ENCODE measurements at regions of chr7 and their contacts with region 1.

Region 1: GRCh38 chr7:28921822-28922221 is 36.3 kb downstream of the TRIL start:
- DNase-seq: peak; percentile 30
- H3K4me3 Mint-ChIP-seq: no peak overlapping the region
- H3K27ac Mint-ChIP-seq: no peak overlapping the region
- H3K4me1 Mint-ChIP-seq: peaks cover 5% of the 10 kb centered on the region
- H3K27me3 Mint-ChIP-seq: peaks cover 17% of the 10 kb centered on the region

Region 2: DNA sequence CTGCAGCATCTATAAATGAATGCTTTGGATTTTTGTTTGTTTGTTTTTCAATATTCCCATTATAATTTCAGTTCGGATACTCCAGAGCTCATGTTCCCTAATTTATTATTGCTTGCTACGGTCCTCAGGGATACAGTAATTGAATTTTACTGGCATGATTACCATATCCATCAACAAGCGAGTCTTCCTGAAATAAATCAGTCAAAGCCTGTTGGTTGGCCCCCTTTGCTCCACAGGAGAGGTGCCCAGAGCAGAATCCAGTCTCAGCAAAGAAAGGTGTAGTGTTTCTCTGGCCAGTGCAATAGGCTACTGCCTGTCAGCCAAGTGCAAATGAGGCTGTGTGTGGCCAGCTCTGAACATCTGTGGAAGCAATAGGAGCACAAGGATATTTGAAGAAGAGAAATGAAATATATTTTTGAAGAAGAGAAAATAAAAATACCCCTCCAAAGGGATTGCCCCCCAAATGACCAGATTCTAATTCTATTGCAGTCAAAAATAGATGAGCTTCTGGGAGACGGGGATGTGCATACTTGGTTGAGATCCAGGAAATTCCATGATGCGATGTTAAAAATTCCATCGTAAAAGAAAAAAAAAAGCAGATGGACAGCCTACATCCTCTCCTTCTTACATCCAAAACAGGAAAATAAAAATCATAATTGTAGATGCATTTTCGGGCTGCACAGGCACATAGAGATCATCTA is 18.2 kb after region 1 on chr7:
- CTCF ChIA-PET with region 1: interaction called, 21 read pairs
- POLR2A ChIA-PET with region 1: no interaction called
- DNase-seq: no peak
- H3K4me3 Mint-ChIP-seq: no peak overlapping the region
- H3K27ac Mint-ChIP-seq: no peak overlapping the region
- H3K4me1 Mint-ChIP-seq: no peaks in the 10 kb centered on the region
- H3K27me3 Mint-ChIP-seq: peaks cover 18% of the 10 kb centered on the region

Region 3: DNA sequence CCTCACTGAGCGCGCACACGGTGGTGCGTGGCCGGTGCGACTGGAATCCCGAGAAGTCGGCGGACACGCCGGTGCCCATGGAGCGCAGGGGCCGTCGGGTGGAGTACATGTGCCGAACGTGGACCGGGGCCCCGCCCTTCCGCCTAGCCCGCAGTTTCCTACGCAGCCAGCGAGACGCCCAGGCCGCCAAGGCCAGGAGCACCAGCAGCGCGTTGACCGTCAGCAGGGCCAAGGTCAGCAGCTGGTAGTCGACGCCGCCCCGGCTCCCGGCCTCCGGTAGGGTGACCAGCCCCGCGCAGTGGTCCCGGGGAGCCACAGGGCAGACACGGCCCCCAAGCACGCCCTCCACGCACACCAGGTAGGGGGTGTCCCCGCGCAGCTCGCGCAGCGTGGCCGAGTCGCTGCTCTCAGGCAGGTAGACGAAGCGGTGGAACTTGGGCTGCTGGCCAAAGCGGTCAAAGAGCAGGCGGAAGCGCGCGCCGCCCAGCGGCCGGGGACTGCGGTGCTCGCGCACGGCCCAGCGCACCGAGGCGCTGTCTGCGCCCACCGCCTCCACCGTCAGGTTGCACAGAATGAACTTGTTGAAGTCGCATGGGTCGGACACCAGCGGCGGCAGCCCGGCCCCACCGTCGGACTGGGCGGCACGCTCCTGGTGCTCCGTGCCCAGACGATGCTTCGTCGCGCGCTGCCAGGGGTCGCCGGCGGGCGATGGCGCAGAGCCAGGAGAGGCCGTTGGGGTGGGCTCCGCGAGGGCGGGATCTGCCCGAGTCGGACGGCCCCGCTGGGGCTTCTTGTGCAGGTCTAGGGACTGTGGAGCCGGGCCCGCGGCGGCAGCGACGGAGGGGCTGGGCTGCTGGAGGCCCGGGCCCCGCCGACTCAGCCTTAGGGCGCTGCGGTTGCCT is 34.1 kb after region 1 on chr7:
- CTCF ChIA-PET with region 1: interaction called, 11 read pairs
- POLR2A ChIA-PET with region 1: no interaction called
- DNase-seq: peak; percentile 33
- H3K4me3 Mint-ChIP-seq: peak overlapping the region; percentile 2
- H3K27ac Mint-ChIP-seq: no peak overlapping the region
- H3K4me1 Mint-ChIP-seq: peaks cover 8% of the 10 kb centered on the region
- H3K27me3 Mint-ChIP-seq: peaks cover 66% of the 10 kb centered on the region

Region 4: GRCh38 chr7:29105752-29106668 is 184.2 kb after region 1 on chr7:
- CTCF ChIA-PET with region 1: interaction called, 88 read pairs
- POLR2A ChIA-PET with region 1: no interaction called
- DNase-seq: peak; percentile 24
- H3K4me3 Mint-ChIP-seq: no peak overlapping the region
- H3K27ac Mint-ChIP-seq: no peak overlapping the region
- H3K4me1 Mint-ChIP-seq: peaks cover 4% of the 10 kb centered on the region
- H3K27me3 Mint-ChIP-seq: peaks cover 22% of the 10 kb centered on the region

Region 5: DNA sequence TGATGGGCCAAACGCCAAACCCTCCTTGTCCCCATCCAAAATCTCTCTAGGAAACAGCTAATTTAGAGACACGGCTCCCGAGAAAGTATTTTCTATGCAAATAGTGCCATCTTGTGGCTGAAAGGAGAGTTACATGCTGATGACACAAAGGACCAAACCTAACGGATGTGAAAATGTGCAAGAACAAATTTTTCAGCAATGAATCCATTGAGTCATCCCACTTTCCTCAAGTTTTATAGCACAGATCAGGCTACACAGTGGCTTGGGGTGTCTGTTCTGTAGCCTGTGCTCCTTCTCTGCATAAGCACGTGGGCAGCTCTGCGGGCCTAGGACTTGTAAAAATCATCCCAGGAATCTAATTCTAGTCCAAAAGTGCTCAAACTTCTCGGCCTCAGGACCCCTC is 487.0 kb after region 1 on chr7:
- CTCF ChIA-PET with region 1: interaction called, 29 read pairs
- POLR2A ChIA-PET with region 1: no interaction called
- DNase-seq: peak; percentile 44
- H3K4me3 Mint-ChIP-seq: no peak overlapping the region
- H3K27ac Mint-ChIP-seq: no peak overlapping the region
- H3K4me1 Mint-ChIP-seq: no peaks in the 10 kb centered on the region
- H3K27me3 Mint-ChIP-seq: no peaks in the 10 kb centered on the region